ENCODE measurements at regions of chr11 and their contacts with region 1.

Region 1: DNA sequence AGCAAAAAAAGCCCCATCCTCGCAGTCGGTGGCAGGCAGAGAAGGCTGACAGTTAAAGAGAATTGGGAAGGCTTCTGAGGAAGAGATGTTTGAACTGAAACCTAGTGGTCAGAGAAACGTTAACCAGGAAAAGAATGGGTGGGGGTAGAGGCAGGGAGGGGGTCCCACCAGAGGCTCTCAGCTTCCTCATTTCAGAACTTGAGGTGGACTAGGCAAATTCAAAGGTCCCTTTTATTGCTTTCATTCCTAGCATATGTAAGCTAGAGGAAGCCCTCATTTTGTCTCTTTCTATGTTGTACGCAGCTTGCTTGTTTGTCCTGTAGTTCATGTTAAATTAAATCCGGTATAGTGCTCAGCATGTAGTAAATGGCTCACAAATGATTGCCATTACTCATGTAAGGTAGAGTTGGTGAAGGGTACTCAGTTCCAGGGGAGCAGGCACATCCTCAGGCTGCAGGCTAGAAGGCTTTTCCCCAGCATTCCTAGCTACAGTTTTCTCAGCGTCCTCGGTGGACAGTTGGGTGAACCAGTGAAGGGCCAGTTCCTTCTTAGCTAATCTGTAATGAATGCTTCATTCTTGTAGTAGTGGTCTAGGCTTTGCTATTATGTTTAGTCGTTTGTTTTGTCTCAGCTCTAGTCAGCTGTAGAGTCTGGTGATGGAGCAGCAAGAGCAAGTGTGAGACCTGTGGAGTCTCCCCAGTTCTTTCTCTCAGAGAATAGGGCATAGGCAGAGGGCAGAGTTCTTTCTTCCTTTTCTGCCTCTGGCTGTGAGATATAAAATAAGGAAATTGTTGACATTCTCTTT is 58.6 kb downstream of the UVRAG start:
- DNase-seq: no peak
- ATAC-seq: no peak
- H3K4me3 ChIP-seq: no peak overlapping the region
- H3K4me3 Mint-ChIP-seq: no peak overlapping the region
- H3K27ac ChIP-seq: no peak overlapping the region
- H3K27ac Mint-ChIP-seq: no peak overlapping the region
- H3K4me1 ChIP-seq: no peaks in the 10 kb centered on the region
- H3K4me1 Mint-ChIP-seq: peaks cover 9% of the 10 kb centered on the region
- H3K27me3 ChIP-seq: no peaks in the 10 kb centered on the region
- H3K27me3 Mint-ChIP-seq: no peaks in the 10 kb centered on the region
- CTCF ChIP-seq: no peak

Region 2: DNA sequence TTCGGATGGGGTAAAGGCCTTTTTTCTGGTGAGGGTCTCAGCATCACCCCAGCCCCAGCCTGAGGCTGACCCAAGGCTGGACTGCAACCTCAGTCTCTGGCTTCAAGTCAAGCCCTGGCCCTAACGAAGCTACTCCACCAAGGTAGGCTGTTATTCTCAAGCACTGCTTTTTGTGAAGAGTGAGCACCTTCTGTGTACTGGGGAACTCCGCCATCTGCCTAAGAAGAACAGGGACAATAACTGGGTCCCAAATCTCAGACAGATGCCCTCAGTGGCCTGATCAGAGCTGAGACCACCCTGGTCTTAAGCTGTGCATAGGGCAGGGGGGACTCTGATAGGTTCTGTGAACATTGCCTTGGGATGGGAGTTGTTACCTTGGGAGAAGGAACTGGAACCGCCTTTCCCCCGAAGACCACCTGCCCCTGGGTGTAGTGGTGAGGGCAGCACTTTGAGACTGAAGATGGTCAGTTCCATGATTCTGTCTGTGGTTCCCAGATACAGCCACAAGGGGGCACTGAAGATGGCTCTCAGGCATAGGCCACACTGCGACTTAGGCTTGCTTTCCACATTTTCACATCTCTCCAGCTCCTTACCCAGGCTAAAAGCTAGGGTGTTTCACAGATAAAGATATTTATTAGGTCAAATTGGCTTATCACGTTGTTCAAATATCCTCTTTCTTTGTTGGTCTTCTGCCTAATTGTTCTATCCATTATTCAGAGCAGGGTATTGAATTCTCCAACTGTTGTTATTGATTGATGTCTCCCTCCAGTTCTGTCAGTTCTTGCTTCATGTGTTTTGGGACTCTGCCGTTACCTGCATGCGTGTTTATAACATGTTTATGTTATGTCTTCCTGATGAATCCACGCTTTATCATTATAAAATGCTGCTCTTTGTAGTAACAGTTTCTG is 70.5 kb before region 1 on chr11:
- CTCF ChIA-PET with region 1: interaction called, 219 read pairs
- POLR2A ChIA-PET with region 1: no interaction called
- intact Hi-C with region 1: no loop called
- DNase-seq: peak; percentile 51 to 80 (median 75)
- ATAC-seq: peak; percentile 98
- H3K4me3 ChIP-seq: no peak overlapping the region
- H3K4me3 Mint-ChIP-seq: no peak overlapping the region
- H3K27ac ChIP-seq: no peak overlapping the region
- H3K27ac Mint-ChIP-seq: no peak overlapping the region
- H3K4me1 ChIP-seq: no peaks in the 10 kb centered on the region
- H3K4me1 Mint-ChIP-seq: peaks cover 5% of the 10 kb centered on the region
- H3K27me3 ChIP-seq: no peaks in the 10 kb centered on the region
- H3K27me3 Mint-ChIP-seq: no peaks in the 10 kb centered on the region
- CTCF ChIP-seq: peak; percentile 91

Measured in CD8-positive, alpha-beta T cell (primary cell).